GM12878 (cell line): ENCODE measurements at regions of chr13 and their contacts with region 1.

Region 1: DNA sequence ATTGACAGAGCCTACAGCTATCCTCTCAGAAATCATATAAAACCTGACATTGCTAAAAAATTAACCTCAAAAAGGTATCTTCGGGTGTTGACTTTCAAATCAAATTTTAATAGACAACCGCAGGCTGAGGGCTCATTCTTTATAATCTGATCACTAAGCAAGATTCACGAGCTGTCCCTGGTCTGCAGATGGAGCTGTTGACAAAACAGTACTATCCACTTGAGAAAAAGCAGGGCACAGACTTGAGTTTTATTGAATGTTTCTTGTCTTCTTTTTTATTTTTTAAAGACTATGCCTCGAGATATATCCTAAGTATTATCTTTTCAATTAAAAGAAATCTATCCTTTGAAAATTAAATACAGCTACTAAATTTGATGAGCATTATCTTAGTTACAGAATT is 540.5 kb downstream of the PCDH9 start:
- DNase-seq: no peak
- ATAC-seq: peak; percentile 44; the same call in 1 of the 3 replicates
- H3K4me3 ChIP-seq: no peak overlapping the region
- H3K27ac ChIP-seq: no peak overlapping the region
- H3K4me1 ChIP-seq: no peaks in the 10 kb centered on the region
- H3K27me3 ChIP-seq: no peaks in the 10 kb centered on the region
- CTCF ChIP-seq: peak in 1 of 3 experiments; percentile 7; a peak in 1 of 6 replicates
- EP300 ChIP-seq: no peak
- POLR2A ChIP-seq: no peak
- RAD21 ChIP-seq: no peak

Region 2: DNA sequence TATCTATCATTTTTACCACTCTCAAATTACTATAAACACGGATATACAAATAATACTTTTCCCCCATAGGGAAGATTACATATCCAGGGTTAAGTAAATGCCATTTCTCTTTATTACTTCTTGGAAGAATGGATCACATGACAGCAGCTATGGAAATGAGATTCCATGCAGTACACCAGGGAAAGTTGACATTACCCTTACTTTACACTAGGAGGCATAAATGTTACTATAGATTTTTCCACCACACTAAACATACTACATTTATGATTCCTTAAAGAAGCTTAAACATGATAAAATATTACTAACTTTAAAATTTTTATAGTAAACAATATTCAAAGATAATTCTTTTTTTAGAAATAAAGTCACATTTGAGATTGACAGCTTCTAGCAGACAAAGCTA is 70.9 kb before region 1 on chr13:
- CTCF ChIA-PET with region 1: interaction called, 8 read pairs
- POLR2A ChIA-PET with region 1: no interaction called
- RAD21 ChIA-PET with region 1: interaction called, 9 read pairs
- SMC1A ChIA-PET with region 1: interaction called, 15 read pairs
- in situ Hi-C with region 1: no loop called
- intact Hi-C with region 1: no loop called
- DNase-seq: no peak
- ATAC-seq: no peak
- H3K4me3 ChIP-seq: no peak overlapping the region
- H3K27ac ChIP-seq: no peak overlapping the region
- H3K4me1 ChIP-seq: no peaks in the 10 kb centered on the region
- H3K27me3 ChIP-seq: no peaks in the 10 kb centered on the region
- CTCF ChIP-seq: peak in 2 of 3 experiments; percentile 15 to 36; a peak in 2 of 6 replicates
- EP300 ChIP-seq: no peak
- POLR2A ChIP-seq: no peak
- RAD21 ChIP-seq: no peak

Region 3: DNA sequence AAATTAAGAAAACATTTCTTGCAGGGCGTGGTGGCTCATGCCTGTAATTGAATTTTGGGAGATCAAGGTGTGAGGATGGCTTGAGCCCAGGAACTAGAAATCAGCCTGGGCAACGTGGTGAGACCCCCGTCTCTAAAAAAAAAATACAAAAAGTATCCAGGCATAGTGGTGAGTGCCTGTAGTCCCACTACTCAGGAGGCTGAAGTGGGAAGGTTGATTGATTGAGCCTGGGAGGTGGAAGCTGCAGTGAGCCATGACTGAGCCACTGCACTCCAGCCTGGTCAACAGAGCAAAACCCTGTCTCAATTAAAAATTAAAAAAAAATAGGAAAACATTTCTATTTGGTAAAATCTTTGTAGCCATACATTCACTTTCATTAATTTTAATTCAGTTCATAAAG is 14.0 kb after region 1 on chr13:
- CTCF ChIA-PET with region 1: no interaction called
- POLR2A ChIA-PET with region 1: no interaction called
- RAD21 ChIA-PET with region 1: no interaction called
- SMC1A ChIA-PET with region 1: no interaction called
- in situ Hi-C with region 1: no loop called
- intact Hi-C with region 1: no loop called
- DNase-seq: no peak
- ATAC-seq: no peak
- H3K4me3 ChIP-seq: no peak overlapping the region
- H3K27ac ChIP-seq: no peak overlapping the region
- H3K4me1 ChIP-seq: no peaks in the 10 kb centered on the region
- H3K27me3 ChIP-seq: no peaks in the 10 kb centered on the region
- CTCF ChIP-seq: no peak
- EP300 ChIP-seq: no peak
- POLR2A ChIP-seq: no peak
- RAD21 ChIP-seq: no peak